B cell (primary cell): ENCODE measurements at regions of chr10 and their contacts with region 1.

Region 1: GRCh38 chr10:121927841-121928527 is at the start of gene ATE1:
- DNase-seq: peak; percentile 89
- ATAC-seq: peak; percentile 93
- H3K4me3 ChIP-seq: peak within 1 kb of the TSS; percentile 71 to 99 (median 82)
- H3K4me3 Mint-ChIP-seq: peak within 1 kb of the TSS; percentile 96
- H3K27ac ChIP-seq: peak within 1 kb of the TSS; percentile 96 to 97
- H3K27ac Mint-ChIP-seq: peak within 1 kb of the TSS; percentile 94
- H3K4me1 ChIP-seq: peaks cover 10 to 16% of the 10 kb centered on the region in 2 donors
- H3K4me1 Mint-ChIP-seq: peaks cover 19% of the 10 kb centered on the region
- H3K27me3 ChIP-seq: no peaks in the 10 kb centered on the region
- H3K27me3 Mint-ChIP-seq: no peaks in the 10 kb centered on the region
- CTCF ChIP-seq: no peak
- total RNA-seq, gene ATE1: 32.0 and 40.3 TPM in 2 replicates

Region 2: GRCh38 chr10:120850911-120851865 is 1076.8 kb before region 1 on chr10 and contains the start of gene WDR11:
- CTCF ChIA-PET with region 1: no interaction called
- POLR2A ChIA-PET with region 1: no interaction called
- intact Hi-C with region 1: loop called (anchors 1 kb)
- DNase-seq: peak; percentile 91
- ATAC-seq: peak; percentile 89
- H3K4me3 ChIP-seq: peak within 1 kb of the TSS; percentile 87 to 97 (median 92)
- H3K4me3 Mint-ChIP-seq: peak within 1 kb of the TSS; percentile 100
- H3K27ac ChIP-seq: peak within 1 kb of the TSS; percentile 97 to 98
- H3K27ac Mint-ChIP-seq: peak within 1 kb of the TSS; percentile 100
- H3K4me1 ChIP-seq: peaks cover 19 to 22% of the 10 kb centered on the region in 2 donors
- H3K4me1 Mint-ChIP-seq: peaks cover 46% of the 10 kb centered on the region
- H3K27me3 ChIP-seq: no peaks in the 10 kb centered on the region
- H3K27me3 Mint-ChIP-seq: no peaks in the 10 kb centered on the region
- CTCF ChIP-seq: no peak
- total RNA-seq, gene WDR11: 230 and 236 TPM in 2 replicates

Region 3: GRCh38 chr10:121974535-121975294 is 46.7 kb after region 1 on chr10 and contains the start of gene NSMCE4A:
- CTCF ChIA-PET with region 1: interaction called, 3 read pairs
- POLR2A ChIA-PET with region 1: interaction called, 7 read pairs
- intact Hi-C with region 1: loop called (anchors 1 kb)
- DNase-seq: peak; percentile 81
- ATAC-seq: peak; percentile 83
- H3K4me3 ChIP-seq: peak within 1 kb of the TSS; percentile 51 to 93 (median 79)
- H3K4me3 Mint-ChIP-seq: peak within 1 kb of the TSS; percentile 81
- H3K27ac ChIP-seq: peak within 1 kb of the TSS; percentile 50 to 78
- H3K27ac Mint-ChIP-seq: peak within 1 kb of the TSS; percentile 70
- H3K4me1 ChIP-seq: peaks cover 11 to 17% of the 10 kb centered on the region in 2 donors
- H3K4me1 Mint-ChIP-seq: peaks cover 20% of the 10 kb centered on the region
- H3K27me3 ChIP-seq: no peaks in the 10 kb centered on the region
- H3K27me3 Mint-ChIP-seq: no peaks in the 10 kb centered on the region
- CTCF ChIP-seq: peak; percentile 46
- total RNA-seq, gene NSMCE4A: 89.7 and 91.0 TPM in 2 replicates